Naive thymus-derived CD4-positive, alpha-beta T cell (primary cell): ENCODE measurements at regions of chr19 and their contacts with region 1.

Region 1: GRCh38 chr19:3762501-3763459 is at the start of gene MRPL54:
- DNase-seq: peak; percentile 98 to 100 (median 100)
- ATAC-seq: peak; percentile 89
- H3K4me3 ChIP-seq: peak within 1 kb of the TSS; percentile 96
- H3K4me3 Mint-ChIP-seq: peak within 1 kb of the TSS; percentile 93 to 99 (median 98)
- H3K27ac ChIP-seq: peak within 1 kb of the TSS; percentile 100
- H3K27ac Mint-ChIP-seq: peak within 1 kb of the TSS; percentile 99 to 100 (median 100)
- H3K4me1 ChIP-seq: peaks cover 19 to 44% of the 10 kb centered on the region in 2 donors
- H3K4me1 Mint-ChIP-seq: peaks cover 23 to 59% (median 39%) of the 10 kb centered on the region in 7 donors
- H3K27me3 ChIP-seq: no peaks in the 10 kb centered on the region
- H3K27me3 Mint-ChIP-seq: peaks cover 0 to 5% (median 0%) of the 10 kb centered on the region in 5 donors
- total RNA-seq, gene MRPL54: 34.0 to 95.2 (median 58.8) TPM

Region 2: GRCh38 chr19:3434712-3435553 is 327.8 kb before region 1 on chr19:
- CTCF ChIA-PET with region 1: no interaction called
- POLR2A ChIA-PET with region 1: no interaction called
- intact Hi-C with region 1: loop called in 1 of 2 experiments (anchors 5 kb)
- DNase-seq: peak; percentile 91 to 97 (median 96)
- ATAC-seq: peak; percentile 99
- H3K4me3 ChIP-seq: peak overlapping the region; percentile 70
- H3K4me3 Mint-ChIP-seq: peak overlapping the region; percentile 87 to 100 (median 96)
- H3K27ac ChIP-seq: peak overlapping the region; percentile 86
- H3K27ac Mint-ChIP-seq: peak overlapping the region; percentile 95 to 99 (median 98)
- H3K4me1 ChIP-seq: peaks cover 9 to 11% of the 10 kb centered on the region in 2 donors
- H3K4me1 Mint-ChIP-seq: peaks cover 7 to 18% (median 14%) of the 10 kb centered on the region in 7 donors
- H3K27me3 ChIP-seq: no peaks in the 10 kb centered on the region
- H3K27me3 Mint-ChIP-seq: no peaks in the 10 kb centered on the region

Region 3: GRCh38 chr19:3692141-3693024 is 70.4 kb before region 1 on chr19:
- CTCF ChIA-PET with region 1: interaction called, 3 read pairs
- POLR2A ChIA-PET with region 1: interaction called, 25 read pairs
- intact Hi-C with region 1: no loop called
- DNase-seq: peak in 7 of 9 donors; percentile 37 to 67 (median 50)
- ATAC-seq: peak; percentile 75
- H3K4me3 ChIP-seq: no peak overlapping the region
- H3K4me3 Mint-ChIP-seq: no peak overlapping the region
- H3K27ac ChIP-seq: no peak overlapping the region
- H3K27ac Mint-ChIP-seq: peak overlapping the region in 1 of 9 donors; percentile 4
- H3K4me1 ChIP-seq: peaks cover 0 to 13% of the 10 kb centered on the region in 2 donors
- H3K4me1 Mint-ChIP-seq: peaks cover 19 to 50% (median 35%) of the 10 kb centered on the region in 7 donors
- H3K27me3 ChIP-seq: no peaks in the 10 kb centered on the region
- H3K27me3 Mint-ChIP-seq: no peaks in the 10 kb centered on the region

Region 4: GRCh38 chr19:3809881-3810707 is 47.3 kb after region 1 on chr19:
- CTCF ChIA-PET with region 1: interaction called, 11 read pairs
- POLR2A ChIA-PET with region 1: interaction called, 35 read pairs
- intact Hi-C with region 1: loop called in 1 of 2 experiments (anchors 2 kb)
- DNase-seq: no peak
- ATAC-seq: no peak
- H3K4me3 ChIP-seq: no peak overlapping the region
- H3K4me3 Mint-ChIP-seq: no peak overlapping the region
- H3K27ac ChIP-seq: no peak overlapping the region
- H3K27ac Mint-ChIP-seq: peak overlapping the region in 5 of 9 donors; percentile 10 to 63 (median 32)
- H3K4me1 ChIP-seq: peaks cover 26 to 36% of the 10 kb centered on the region in 2 donors
- H3K4me1 Mint-ChIP-seq: peaks cover 24 to 41% (median 36%) of the 10 kb centered on the region in 7 donors
- H3K27me3 ChIP-seq: no peaks in the 10 kb centered on the region
- H3K27me3 Mint-ChIP-seq: no peaks in the 10 kb centered on the region

Region 5: GRCh38 chr19:4007021-4007835 is 244.4 kb after region 1 on chr19 and contains the start of gene PIAS4:
- CTCF ChIA-PET with region 1: no interaction called
- POLR2A ChIA-PET with region 1: interaction called, 7 read pairs
- intact Hi-C with region 1: loop called in 1 of 2 experiments (anchors 1 kb)
- DNase-seq: peak; percentile 93 to 97 (median 96)
- ATAC-seq: peak; percentile 95
- H3K4me3 ChIP-seq: peak within 1 kb of the TSS; percentile 76
- H3K4me3 Mint-ChIP-seq: peak within 1 kb of the TSS; percentile 82 to 93 (median 88)
- H3K27ac ChIP-seq: peak within 1 kb of the TSS; percentile 75
- H3K27ac Mint-ChIP-seq: peak within 1 kb of the TSS; percentile 31 to 93 (median 85)
- H3K4me1 ChIP-seq: peaks cover 26 to 27% of the 10 kb centered on the region in 2 donors
- H3K4me1 Mint-ChIP-seq: peaks cover 13 to 33% (median 23%) of the 10 kb centered on the region in 7 donors
- H3K27me3 ChIP-seq: no peaks in the 10 kb centered on the region
- H3K27me3 Mint-ChIP-seq: no peaks in the 10 kb centered on the region
- total RNA-seq, gene PIAS4: 23.9 to 40.6 (median 28.8) TPM

Region 6: DNA sequence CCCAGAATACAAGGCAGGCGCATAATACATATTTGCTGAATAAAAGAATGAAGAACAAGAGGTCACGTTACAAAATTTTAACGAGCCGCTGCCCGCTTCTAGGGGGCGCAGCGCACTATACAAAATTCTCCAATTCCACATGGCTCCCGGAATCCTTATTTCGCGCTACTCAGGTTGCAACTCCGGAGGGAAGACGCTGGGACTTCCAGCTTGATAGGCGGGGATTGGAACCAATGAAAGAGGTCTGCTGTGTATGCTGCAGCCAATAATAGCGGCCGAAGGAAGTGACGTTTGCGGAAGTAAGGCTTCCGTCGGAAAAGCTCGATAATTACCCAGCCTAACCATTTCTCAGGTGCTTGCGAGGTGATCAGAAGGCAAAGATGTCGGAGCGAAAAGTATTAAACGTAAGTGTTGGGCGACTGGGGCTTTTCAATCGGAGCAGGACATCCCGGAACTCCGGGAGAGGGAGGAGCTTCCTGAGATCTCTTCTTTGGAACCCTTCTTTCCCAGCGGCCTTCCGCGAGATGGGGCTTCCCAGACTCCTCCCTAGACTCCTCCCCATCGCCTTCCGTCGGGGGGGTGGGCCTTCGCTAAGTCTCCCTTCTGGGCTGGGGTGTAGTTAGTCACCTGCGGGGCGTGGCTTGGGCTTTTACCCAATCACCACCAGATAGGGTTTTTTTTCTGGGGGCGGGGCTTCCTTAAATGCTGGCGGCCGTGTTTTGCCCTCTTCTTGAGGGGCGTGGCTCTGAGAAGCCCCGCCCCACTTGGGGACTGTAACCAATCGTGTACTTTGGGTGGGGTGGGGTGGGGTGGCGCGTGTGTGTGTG is 484.2 kb after region 1 on chr19 and contains the start of gene YJU2:
- CTCF ChIA-PET with region 1: no interaction called
- POLR2A ChIA-PET with region 1: interaction called, 7 read pairs
- intact Hi-C with region 1: loop called (anchors 1 to 2 kb)
- DNase-seq: peak; percentile 92 to 100 (median 99)
- ATAC-seq: peak; percentile 96
- H3K4me3 ChIP-seq: peak within 1 kb of the TSS; percentile 100
- H3K4me3 Mint-ChIP-seq: peak within 1 kb of the TSS; percentile 85 to 98 (median 96)
- H3K27ac ChIP-seq: peak within 1 kb of the TSS; percentile 99
- H3K27ac Mint-ChIP-seq: peak within 1 kb of the TSS; percentile 97 to 100 (median 99)
- H3K4me1 ChIP-seq: peaks cover 12 to 13% of the 10 kb centered on the region in 2 donors
- H3K4me1 Mint-ChIP-seq: peaks cover 10 to 33% (median 24%) of the 10 kb centered on the region in 7 donors
- H3K27me3 ChIP-seq: no peaks in the 10 kb centered on the region
- H3K27me3 Mint-ChIP-seq: peaks cover 0 to 2% (median 0%) of the 10 kb centered on the region in 5 donors
- total RNA-seq, gene YJU2: 28.5 to 42.1 (median 31.9) TPM